ENCODE measurements at regions of chr1 and their contacts with region 1.

Region 1: GRCh38 chr1:109718491-109718890 is 6.4 kb downstream of the GSTM5 start:
- DNase-seq: no peak
- H3K4me3 ChIP-seq: no peak overlapping the region
- H3K27ac ChIP-seq: no peak overlapping the region
- H3K4me1 ChIP-seq: no peaks in the 10 kb centered on the region
- H3K27me3 ChIP-seq: no peaks in the 10 kb centered on the region
- CTCF ChIP-seq: no peak

Region 2: DNA sequence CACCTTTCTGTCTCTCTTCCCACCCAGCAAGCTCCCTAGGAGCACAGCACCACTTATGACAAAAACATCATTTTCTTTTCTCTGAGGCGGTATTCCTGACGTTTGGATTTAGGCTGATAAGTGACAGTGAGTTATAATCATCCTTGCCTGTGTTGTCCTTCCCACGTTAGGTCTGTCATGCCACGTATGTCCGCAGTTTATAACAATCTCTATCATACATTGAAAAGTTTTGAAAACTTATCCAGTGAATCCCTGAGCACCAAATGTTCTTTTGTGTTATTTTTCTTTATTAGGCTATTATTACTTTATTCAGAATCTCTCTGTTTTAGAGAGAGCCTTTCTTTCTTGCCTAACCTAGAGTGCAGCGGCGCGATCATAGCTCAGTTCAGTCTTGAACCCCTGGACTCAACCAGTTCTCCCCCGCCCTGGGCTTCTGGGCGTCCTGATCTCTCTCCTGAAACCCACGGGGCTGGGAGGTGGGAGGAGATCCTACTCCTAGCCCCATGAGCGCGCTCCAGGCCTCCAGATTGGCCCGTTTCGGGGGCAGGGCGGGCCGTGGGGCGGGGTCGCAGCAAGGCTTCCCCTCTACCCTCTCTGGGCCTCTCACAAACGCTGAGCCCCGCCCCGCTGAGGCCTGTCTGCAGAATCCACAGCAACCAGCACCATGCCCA is 50.9 kb before region 1 on chr1 and contains the start of gene GSTM2:
- intact Hi-C with region 1: no loop called
- DNase-seq: peak; percentile 80 to 97
- H3K4me3 ChIP-seq: peak within 1 kb of the TSS; percentile 59 to 66
- H3K27ac ChIP-seq: peak within 1 kb of the TSS; percentile 22 to 28
- H3K4me1 ChIP-seq: peaks cover 0 to 5% of the 10 kb centered on the region in 2 donors
- H3K27me3 ChIP-seq: no peaks in the 10 kb centered on the region
- CTCF ChIP-seq: no peak
- total RNA-seq, gene GSTM2: 20.3 TPM

Region 3: DNA sequence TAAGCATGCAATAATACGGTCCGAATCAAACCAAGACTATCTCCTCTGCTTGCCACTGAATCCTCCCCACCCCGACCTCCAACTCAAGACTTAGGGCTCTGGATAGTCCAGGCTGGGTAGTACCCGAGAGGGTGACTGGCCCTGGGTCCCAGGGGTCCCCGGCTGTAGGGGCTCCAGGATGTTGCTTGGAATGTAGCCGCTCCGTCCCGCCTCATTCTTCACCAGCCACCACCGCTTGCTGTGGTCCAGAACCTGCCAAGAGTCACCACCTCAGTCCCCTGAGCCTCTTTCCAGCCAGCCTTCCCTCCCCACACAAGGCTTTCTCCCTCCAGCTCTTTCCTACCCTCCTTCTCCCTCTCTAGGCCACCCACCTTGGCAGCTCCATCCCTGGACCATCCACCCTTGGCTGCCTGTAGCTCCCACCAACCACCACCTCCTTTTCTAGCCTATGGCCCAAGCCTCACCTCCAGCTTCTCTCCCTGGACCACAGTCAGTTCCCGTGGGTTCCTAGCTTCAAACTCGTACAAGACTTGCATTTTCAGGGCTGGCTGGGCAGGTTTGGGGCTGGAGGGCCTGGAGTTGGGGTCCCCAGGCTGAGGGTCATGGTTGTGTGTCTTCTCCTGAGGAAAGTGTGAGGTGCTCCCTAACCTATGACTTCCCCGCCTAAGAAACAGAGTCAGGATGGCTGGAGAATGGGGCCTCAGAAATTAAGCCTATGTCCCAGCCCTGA is 33.2 kb after region 1 on chr1:
- intact Hi-C with region 1: loop called (anchors 5 kb)
- DNase-seq: peak in 1 of 2 donors; percentile 51
- H3K4me3 ChIP-seq: no peak overlapping the region
- H3K27ac ChIP-seq: no peak overlapping the region
- H3K4me1 ChIP-seq: no peaks in the 10 kb centered on the region
- H3K27me3 ChIP-seq: no peaks in the 10 kb centered on the region
- CTCF ChIP-seq: no peak

Measured in ascending aorta (tissue), 2 donors.